Mammary epithelial cell (primary cell): ENCODE measurements at regions of chr7 and their contacts with region 1.

Region 1: GRCh38 chr7:39987476-39988347 is 37.7 kb downstream of the CDK13 start:
- DNase-seq: no peak
- H3K4me3 ChIP-seq: no peak overlapping the region
- H3K27ac ChIP-seq: no peak overlapping the region
- H3K4me1 ChIP-seq: no peaks in the 10 kb centered on the region
- H3K27me3 ChIP-seq: no peaks in the 10 kb centered on the region
- CTCF ChIP-seq: no peak

Region 2: DNA sequence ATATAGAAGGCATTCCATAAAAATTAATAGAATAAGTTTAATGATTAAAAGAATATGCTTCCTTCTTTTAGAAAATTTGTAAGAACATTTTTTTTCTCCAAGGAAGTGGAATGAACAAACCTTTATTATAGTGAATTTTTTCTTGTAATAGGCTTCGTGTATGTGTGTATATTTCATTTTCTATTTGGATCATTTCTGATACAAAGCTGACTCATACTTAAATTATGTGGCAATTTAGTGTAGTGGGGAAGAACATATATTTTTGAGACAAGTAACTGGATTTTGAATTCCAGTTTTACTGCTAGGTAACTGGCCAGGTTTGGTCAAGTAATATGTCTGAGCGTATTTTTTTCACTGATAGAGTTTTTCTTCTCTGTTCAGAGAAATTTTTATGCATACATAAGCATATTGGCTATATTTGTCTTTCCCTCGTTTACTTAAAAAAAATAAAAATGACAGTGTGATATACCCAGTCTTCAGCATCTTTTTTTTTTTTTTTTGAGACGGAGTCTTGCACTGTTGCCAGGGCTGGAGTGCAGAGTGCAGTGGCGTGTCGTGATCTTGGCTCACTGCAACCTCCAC is 13.1 kb after region 1 on chr7:
- CTCF ChIA-PET with region 1: interaction called, 25 read pairs
- dilution Hi-C with region 1: no loop called
- in situ Hi-C with region 1: no loop called
- intact Hi-C with region 1: no loop called
- DNase-seq: no peak
- H3K4me3 ChIP-seq: no peak overlapping the region
- H3K27ac ChIP-seq: no peak overlapping the region
- H3K4me1 ChIP-seq: no peaks in the 10 kb centered on the region
- H3K27me3 ChIP-seq: no peaks in the 10 kb centered on the region
- CTCF ChIP-seq: no peak